Posterior cingulate gyrus (tissue), 11 donors: ENCODE measurements at regions of chr15 and their contacts with region 1.

Region 1: DNA sequence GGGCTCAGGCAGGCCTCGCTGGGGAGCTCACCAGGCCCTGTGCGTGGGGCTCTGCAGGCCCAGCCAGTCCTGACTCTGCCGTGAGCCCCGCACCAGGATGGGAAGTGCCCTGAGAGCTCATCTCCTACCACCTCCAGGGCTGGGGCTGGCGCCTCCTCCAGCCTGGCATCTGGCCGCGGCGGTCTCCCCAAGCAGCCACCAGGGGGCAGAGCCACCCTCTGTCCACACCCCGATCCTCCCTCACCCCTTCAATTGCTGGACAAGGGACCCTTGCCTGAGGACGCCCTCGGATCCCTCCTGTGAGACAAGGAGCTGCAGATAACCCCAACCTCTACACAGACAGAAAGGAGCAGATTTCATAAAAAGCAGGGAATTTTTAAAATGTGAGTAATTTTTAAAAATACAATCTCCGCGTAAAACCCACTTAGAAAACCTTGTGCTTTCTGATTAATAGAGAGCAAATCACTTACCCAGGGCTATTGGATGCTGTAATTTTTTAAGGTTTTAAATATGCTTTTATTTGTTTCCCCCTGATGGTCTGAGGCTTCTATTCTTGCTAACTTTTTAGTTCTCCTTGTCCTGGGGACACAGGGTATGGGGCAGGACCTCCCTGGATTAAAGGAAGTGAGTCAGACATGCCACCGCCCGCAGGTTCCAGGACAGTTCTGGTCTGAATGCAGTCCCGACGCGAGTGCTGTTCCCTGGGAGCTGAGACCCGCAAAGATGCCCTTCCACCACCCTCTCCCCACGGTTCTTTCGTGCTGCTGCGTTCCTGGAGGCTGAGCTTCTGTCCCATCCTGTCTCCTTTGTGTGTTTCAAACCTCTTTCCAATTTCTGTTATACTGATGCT is 52.3 kb upstream of the CHRNA7 start:
- DNase-seq: peak; percentile 55 to 97 (median 78)

Region 2: GRCh38 chr15:31488426-31489204 is 489.4 kb before region 1 on chr15:
- intact Hi-C with region 1: loop called (anchors 10 kb)
- DNase-seq: peak in 3 of 10 donors; percentile 42 to 89 (median 72)

Region 3: GRCh38 chr15:31571671-31572070 is 406.4 kb before region 1 on chr15:
- intact Hi-C with region 1: loop called (anchors 10 kb)
- DNase-seq: no peak

Region 4: GRCh38 chr15:31605371-31605931 is 372.6 kb before region 1 on chr15:
- intact Hi-C with region 1: no loop called
- DNase-seq: peak in 3 of 10 donors; percentile 18 to 80 (median 51)

Region 5: GRCh38 chr15:31824024-31824423 is 154.0 kb before region 1 on chr15:
- intact Hi-C with region 1: no loop called
- DNase-seq: peak in 1 of 10 donors; percentile 27

Region 6: DNA sequence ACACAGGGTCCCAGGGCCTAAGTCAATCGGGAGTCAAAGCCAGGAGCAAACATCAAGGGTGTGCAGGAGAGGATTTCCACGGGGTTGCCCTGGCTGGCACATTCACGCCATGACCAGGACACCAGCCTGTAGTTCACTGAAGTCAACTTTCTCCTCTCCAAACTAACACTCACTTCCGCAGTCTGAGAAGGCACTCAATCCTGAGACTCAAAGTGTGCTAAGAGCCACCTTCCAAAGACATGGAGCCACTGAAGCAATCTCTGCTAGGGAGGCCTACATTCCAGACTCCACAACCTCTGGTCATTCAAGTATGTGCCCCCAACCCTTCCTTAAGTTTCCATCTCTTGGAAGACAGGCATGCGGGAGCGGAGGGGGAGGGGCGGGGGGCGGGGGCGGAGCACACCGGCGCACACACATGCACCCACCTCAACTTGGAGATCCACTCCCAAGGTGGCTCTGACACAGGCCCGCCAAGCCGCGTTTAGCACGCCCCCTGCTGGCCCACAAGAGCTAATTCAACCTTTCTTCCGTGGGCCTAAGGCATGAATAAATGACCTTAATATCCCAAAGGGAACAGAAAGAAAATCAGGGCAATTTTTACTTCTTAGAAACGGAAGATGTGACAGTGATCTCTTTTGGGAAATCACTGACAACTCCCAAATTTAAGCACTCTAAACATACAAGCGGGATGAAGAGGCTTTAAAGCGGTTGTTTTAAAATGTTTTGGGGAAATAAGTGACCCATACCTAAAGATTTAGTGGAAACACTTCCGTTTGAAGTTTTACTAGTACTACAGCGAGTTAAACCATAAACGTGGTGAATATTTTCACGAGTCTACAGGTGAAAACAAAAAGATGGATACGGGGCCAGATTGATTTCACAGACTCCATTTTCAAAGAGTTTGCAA is 110.2 kb before region 1 on chr15:
- intact Hi-C with region 1: loop called (anchors 5 kb)
- DNase-seq: peak; percentile 43 to 97 (median 72)

Region 7: GRCh38 chr15:32029862-32030781 is 52.1 kb after region 1 on chr15 and contains the start of gene CHRNA7:
- intact Hi-C with region 1: loop called (anchors 5 kb)
- DNase-seq: peak; percentile 47 to 93 (median 62)